WTC11 (cell line): ENCODE measurements at regions of chr2 and their contacts with region 1.

Region 1: GRCh38 chr2:85551698-85552678 is 9.3 kb downstream of the GGCX start:
- DNase-seq: peak; percentile 91
- ATAC-seq: peak; percentile 77
- H3K4me3 Mint-ChIP-seq: no peak overlapping the region
- H3K27ac Mint-ChIP-seq: no peak overlapping the region
- H3K4me1 Mint-ChIP-seq: peaks cover 5% of the 10 kb centered on the region
- H3K27me3 Mint-ChIP-seq: no peaks in the 10 kb centered on the region
- CTCF ChIP-seq: peak; percentile 88

Region 2: DNA sequence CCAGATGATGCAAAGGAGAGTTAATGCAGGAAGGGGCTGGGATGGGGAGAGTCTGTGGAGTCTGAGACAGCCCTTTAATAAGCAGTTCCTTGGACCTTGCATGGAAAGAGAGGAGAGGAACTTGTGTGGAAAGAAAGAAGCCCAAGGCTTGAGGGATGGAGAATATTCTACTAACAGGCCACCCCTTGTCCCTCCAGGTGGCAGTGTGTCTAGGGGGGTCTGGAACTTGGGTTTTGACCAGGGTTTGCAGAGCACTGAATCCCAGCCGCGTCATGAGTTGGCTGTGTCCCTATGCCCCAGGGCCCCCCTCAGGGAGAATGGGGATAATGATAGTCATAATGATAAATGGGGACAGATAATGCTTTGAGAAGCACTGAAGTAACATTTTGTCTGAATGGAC is 403.8 kb before region 1 on chr2:
- CTCF ChIA-PET with region 1: no interaction called
- POLR2A ChIA-PET with region 1: no interaction called
- DNase-seq: no peak
- ATAC-seq: peak; percentile 57
- H3K4me3 Mint-ChIP-seq: no peak overlapping the region
- H3K27ac Mint-ChIP-seq: peak overlapping the region; percentile 24; the same call in 1 of the 2 replicates
- H3K4me1 Mint-ChIP-seq: peaks cover 43% of the 10 kb centered on the region
- H3K27me3 Mint-ChIP-seq: no peaks in the 10 kb centered on the region
- CTCF ChIP-seq: no peak

Region 3: DNA sequence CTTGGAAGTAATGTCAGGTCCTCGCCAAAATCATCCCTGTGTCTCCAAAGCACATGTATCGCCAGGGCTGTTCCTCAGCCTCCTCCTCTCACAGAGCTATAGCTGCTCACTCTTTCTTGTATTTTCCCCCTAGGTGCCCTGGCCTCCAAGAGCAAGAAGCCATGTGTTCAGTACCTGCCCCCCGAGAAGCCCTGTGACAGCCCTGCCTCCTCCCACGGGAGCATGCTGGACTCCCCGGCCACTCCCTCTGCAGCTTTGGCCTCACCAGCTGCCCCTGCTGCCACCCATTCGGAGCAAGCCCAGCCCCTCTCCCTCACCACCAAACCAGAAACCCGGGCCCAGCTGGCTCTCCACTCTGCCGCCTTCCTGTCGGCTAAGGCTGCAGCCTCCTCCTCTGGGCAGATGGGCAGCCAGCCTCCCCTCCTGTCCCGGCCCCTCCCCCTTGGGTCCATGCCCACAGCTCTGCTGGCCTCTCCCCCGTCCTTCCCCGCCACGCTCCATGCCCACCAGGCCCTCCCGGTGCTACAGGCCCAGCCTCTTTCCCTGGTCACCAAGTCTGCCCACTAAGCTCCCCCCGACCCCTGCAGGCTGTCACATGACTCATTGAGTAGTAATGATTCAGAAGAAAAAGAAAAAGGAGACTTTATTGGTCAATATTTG is 243.0 kb before region 1 on chr2:
- CTCF ChIA-PET with region 1: interaction called, 12 read pairs
- POLR2A ChIA-PET with region 1: no interaction called
- DNase-seq: no peak
- ATAC-seq: no peak
- H3K4me3 Mint-ChIP-seq: no peak overlapping the region
- H3K27ac Mint-ChIP-seq: no peak overlapping the region
- H3K4me1 Mint-ChIP-seq: peaks cover 19% of the 10 kb centered on the region
- H3K27me3 Mint-ChIP-seq: no peaks in the 10 kb centered on the region
- CTCF ChIP-seq: no peak

Region 4: GRCh38 chr2:85371045-85371444 is 180.9 kb before region 1 on chr2:
- CTCF ChIA-PET with region 1: interaction called, 12 read pairs
- POLR2A ChIA-PET with region 1: no interaction called
- DNase-seq: no peak
- ATAC-seq: no peak
- H3K4me3 Mint-ChIP-seq: no peak overlapping the region
- H3K27ac Mint-ChIP-seq: no peak overlapping the region
- H3K4me1 Mint-ChIP-seq: no peaks in the 10 kb centered on the region
- H3K27me3 Mint-ChIP-seq: no peaks in the 10 kb centered on the region
- CTCF ChIP-seq: no peak

Region 5: DNA sequence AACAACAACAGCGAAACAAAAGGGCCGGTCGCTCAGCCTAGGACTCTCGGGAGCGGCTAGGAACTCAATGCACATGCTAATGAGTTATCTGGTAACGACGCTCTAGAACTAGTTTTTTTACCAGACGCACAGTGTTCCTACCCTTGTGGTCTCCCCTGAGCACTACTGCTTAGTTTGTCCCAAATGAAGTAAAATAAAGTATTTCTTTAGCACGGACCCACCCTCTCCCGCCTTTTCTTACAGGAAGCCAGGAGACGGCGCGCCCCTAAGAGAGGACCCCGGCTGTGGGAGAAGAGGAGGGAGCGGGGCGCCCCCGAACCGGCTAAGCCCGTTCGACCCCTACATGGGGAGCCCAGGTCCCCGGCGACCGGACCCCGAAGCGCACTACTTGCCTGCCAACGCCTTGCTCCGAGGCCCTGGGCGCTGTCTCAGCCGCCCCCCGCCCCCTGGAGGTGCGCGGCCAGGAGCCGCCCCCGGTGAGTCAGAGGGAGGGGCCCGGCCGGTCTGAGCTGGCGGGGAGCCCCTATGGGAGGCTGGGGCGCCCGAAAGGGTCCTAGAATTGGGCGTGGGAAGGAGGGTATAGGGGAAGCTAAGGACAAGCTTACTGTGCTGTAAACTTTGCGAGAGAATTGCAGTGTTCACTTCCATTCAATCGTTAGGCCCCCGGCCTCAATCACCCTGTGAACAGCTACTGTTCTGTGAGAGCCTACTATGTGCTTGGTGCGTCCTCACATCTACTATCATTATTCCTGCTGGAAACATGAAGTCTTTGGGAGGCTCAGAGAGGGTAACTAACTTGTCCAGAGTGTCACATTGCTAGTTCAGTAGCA is 138.2 kb before region 1 on chr2:
- CTCF ChIA-PET with region 1: interaction called, 106 read pairs
- POLR2A ChIA-PET with region 1: interaction called, 15 read pairs
- DNase-seq: peak; percentile 58
- ATAC-seq: peak; percentile 36
- H3K4me3 Mint-ChIP-seq: peak overlapping the region; percentile 93
- H3K27ac Mint-ChIP-seq: peak overlapping the region; percentile 92
- H3K4me1 Mint-ChIP-seq: peaks cover 43% of the 10 kb centered on the region
- H3K27me3 Mint-ChIP-seq: no peaks in the 10 kb centered on the region
- CTCF ChIP-seq: no peak

Region 6: DNA sequence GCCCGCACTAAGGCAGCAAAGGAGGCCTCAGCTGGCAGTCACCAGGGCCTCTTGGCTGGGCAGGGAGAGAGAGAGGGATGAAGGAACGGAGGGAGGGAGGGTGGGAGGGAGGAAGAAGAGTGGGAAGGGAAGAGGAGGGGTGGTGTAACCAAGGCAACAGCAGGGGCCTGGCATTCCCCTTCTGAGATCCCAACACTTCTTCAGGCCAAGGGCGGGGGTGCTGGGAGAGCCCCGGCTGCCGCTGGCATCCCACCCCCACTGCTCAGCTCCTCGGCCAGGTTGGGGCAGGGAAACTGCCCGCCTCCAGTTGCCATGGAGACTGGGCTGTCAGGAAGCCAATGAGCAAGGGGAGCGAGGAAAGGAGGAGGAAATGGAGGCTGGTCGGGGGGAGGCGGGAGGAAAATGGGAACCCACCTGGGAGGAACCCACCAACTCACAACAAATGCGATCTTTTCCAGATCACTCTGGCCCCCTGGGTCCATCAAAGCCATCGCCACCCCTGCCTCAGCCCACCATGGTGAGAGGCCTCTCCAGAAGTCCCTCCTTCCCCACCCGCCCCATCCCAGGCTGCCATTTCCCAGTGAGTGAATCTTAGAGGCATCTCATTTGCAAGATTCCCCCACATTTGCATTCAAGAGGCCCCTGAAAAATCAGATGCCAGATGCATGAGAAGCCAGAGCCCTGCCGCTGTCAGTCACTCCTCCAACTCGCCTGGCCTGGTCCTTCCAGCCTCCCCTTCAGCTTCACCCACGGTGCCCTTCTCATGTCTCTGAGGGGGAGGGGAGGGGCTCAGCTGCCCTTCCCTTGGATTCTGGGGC is 121.0 kb before region 1 on chr2:
- CTCF ChIA-PET with region 1: interaction called, 10 read pairs
- POLR2A ChIA-PET with region 1: interaction called, 10 read pairs
- DNase-seq: peak; percentile 88
- ATAC-seq: peak; percentile 80
- H3K4me3 Mint-ChIP-seq: peak overlapping the region; percentile 48
- H3K27ac Mint-ChIP-seq: no peak overlapping the region; the same call in 1 of the 2 replicates
- H3K4me1 Mint-ChIP-seq: peaks cover 57% of the 10 kb centered on the region
- H3K27me3 Mint-ChIP-seq: peaks cover 21% of the 10 kb centered on the region
- CTCF ChIP-seq: no peak

Region 7: DNA sequence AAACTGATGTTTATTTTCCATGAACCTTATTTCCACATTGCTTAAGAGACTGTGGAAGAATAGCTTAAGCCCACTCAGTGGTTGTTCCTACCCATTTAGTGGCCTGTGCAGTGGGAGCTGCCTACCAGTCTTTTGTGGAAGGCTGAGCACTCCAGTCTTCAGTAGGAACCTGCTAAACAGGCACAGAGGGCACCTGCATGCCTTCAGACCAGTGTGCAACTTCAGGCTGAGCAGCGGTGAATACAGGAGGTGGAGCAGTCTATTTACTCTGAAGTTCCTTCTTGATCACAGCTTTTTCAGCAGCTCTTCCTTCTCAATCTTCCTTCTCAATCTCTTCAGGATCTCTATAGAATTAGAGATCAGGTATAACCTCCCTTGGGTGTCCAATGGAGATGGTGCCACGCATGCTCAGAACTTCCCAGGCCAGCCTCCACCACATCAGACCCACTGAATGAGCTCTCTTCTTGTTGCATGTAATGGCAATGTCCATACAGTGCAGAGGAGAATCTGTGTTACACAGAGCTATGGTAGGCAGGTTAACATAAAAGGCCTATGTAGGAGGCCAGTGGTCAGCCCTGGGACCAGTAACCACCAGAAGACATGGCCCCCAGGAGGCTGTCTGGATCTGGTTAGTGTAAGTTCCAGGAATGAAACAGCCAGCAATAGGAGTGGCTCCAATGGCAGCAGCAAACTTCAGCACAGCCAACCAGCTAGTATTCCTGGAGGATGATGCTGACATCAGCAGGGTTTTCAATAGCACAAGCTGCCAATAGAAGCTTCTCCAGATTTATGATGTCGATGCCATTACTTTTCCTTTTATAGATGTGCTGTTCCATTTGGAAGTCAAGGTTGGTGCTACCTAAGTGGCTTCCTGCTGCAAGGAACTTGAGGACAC is 60.9 kb before region 1 on chr2:
- CTCF ChIA-PET with region 1: no interaction called
- POLR2A ChIA-PET with region 1: no interaction called
- DNase-seq: no peak
- ATAC-seq: no peak
- H3K4me3 Mint-ChIP-seq: no peak overlapping the region
- H3K27ac Mint-ChIP-seq: no peak overlapping the region
- H3K4me1 Mint-ChIP-seq: peaks cover 10% of the 10 kb centered on the region; the same call in 1 of the 2 replicates
- H3K27me3 Mint-ChIP-seq: peaks cover 7% of the 10 kb centered on the region; the same call in 1 of the 2 replicates
- CTCF ChIP-seq: no peak

Region 8: DNA sequence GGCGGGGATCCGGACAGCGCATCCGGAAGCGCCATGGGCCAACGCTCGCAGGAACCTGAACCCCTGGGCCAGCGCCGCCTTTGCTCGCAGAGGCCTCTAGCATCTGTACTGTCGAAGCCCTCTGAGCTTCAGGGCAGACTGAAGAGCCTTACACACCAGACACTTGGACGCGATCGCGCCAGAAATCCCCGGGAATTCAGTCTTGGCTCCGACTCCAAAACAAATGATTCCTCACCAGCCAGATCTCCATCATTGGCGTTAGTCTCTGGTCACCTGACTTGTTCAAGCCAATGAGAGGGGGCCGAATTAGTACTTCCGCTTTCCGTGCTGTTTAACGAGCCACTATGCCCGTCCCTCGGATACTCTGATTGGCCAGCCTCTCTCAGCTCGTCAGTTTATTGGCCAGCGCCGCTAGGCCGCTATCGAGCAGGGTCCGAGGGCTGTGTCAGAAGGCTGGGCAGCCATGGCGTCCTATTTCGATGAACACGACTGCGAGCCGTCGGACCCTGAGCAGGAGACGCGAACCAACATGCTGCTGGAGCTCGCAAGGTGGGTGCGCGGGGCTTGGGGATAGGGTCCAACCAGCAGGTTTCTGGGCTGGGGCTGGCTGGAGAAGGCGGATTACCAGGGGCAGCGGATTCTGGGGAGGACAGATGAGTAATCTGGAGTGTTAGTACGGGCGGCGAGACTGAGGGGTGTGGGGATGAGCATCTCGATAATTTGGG is 43.5 kb after region 1 on chr2 and contains the start of gene RNF181:
- CTCF ChIA-PET with region 1: interaction called, 12 read pairs
- POLR2A ChIA-PET with region 1: no interaction called
- DNase-seq: peak; percentile 91
- ATAC-seq: peak; percentile 99
- H3K4me3 Mint-ChIP-seq: peak within 1 kb of the TSS; percentile 98
- H3K27ac Mint-ChIP-seq: peak within 1 kb of the TSS; percentile 91
- H3K4me1 Mint-ChIP-seq: peaks cover 14% of the 10 kb centered on the region
- H3K27me3 Mint-ChIP-seq: peaks cover 5% of the 10 kb centered on the region
- CTCF ChIP-seq: no peak
- total RNA-seq, gene RNF181: 95.4 to 108 TPM (median 102 TPM) in 3 replicates